ENCODE measurements at regions of chr7 and their contacts with region 1.

Region 1: GRCh38 chr7:143948733-143949132 is 5.9 kb upstream of the OR2F1 start:
- DNase-seq: no peak
- H3K4me3 ChIP-seq: no peak overlapping the region
- H3K27ac ChIP-seq: no peak overlapping the region
- H3K4me1 ChIP-seq: no peaks in the 10 kb centered on the region
- H3K27me3 ChIP-seq: no peaks in the 10 kb centered on the region
- CTCF ChIP-seq: no peak

Region 2: GRCh38 chr7:143929224-143929920 is 19.4 kb before region 1 on chr7:
- CTCF ChIA-PET with region 1: no interaction called
- POLR2A ChIA-PET with region 1: no interaction called
- intact Hi-C with region 1: loop called (anchors 2 kb)
- DNase-seq: no peak
- H3K4me3 ChIP-seq: no peak overlapping the region
- H3K27ac ChIP-seq: no peak overlapping the region
- H3K4me1 ChIP-seq: no peaks in the 10 kb centered on the region
- H3K27me3 ChIP-seq: no peaks in the 10 kb centered on the region
- CTCF ChIP-seq: no peak

Region 3: DNA sequence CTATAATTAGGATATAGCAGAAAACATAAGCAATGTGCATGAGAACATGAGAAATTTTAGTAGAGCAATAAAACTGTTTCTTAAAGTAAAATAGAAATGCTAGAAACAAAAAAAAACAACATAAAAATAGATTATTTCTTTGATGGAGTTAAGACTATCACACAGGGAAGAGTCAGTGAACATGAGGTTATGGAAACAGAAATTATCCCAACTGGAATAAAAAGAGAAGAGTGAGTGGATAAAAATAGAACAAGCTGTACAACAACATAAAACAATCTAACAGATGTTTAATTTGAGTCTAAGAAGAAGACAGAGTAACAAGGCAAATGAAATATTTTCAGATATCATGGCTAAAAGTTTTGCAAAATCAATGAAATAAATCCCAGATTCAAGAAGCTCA is 43.9 kb after region 1 on chr7:
- CTCF ChIA-PET with region 1: no interaction called
- POLR2A ChIA-PET with region 1: no interaction called
- intact Hi-C with region 1: loop called (anchors 10 kb)
- DNase-seq: no peak
- H3K4me3 ChIP-seq: no peak overlapping the region
- H3K27ac ChIP-seq: no peak overlapping the region
- H3K4me1 ChIP-seq: no peaks in the 10 kb centered on the region
- H3K27me3 ChIP-seq: no peaks in the 10 kb centered on the region
- CTCF ChIP-seq: no peak

Region 4: GRCh38 chr7:144378651-144379050 is 429.9 kb after region 1 on chr7:
- CTCF ChIA-PET with region 1: no interaction called
- POLR2A ChIA-PET with region 1: no interaction called
- intact Hi-C with region 1: no loop called
- DNase-seq: no peak
- H3K4me3 ChIP-seq: no peak overlapping the region
- H3K27ac ChIP-seq: no peak overlapping the region
- H3K4me1 ChIP-seq: no peaks in the 10 kb centered on the region
- H3K27me3 ChIP-seq: no peaks in the 10 kb centered on the region
- CTCF ChIP-seq: no peak

Measured in PC-9 (cell line).